ENCODE measurements at regions of chr14 and their contacts with region 1.

Region 1: GRCh38 chr14:23512156-23512555 is 39.4 kb downstream of the ZFHX2 start:
- DNase-seq: no peak
- H3K4me3 ChIP-seq: no peak overlapping the region
- H3K27ac ChIP-seq: no peak overlapping the region
- H3K4me1 ChIP-seq: peaks cover 0 to 5% (median 2%) of the 10 kb centered on the region in 4 experiments; a peak in 3 of 7 replicates
- H3K27me3 ChIP-seq: peaks cover 0 to 4% (median 0%) of the 10 kb centered on the region in 4 experiments; a peak in 1 of 7 replicates
- CTCF ChIP-seq: no peak
- EP300 ChIP-seq: no peak
- POLR2A ChIP-seq: no peak
- RAD21 ChIP-seq: no peak

Region 2: DNA sequence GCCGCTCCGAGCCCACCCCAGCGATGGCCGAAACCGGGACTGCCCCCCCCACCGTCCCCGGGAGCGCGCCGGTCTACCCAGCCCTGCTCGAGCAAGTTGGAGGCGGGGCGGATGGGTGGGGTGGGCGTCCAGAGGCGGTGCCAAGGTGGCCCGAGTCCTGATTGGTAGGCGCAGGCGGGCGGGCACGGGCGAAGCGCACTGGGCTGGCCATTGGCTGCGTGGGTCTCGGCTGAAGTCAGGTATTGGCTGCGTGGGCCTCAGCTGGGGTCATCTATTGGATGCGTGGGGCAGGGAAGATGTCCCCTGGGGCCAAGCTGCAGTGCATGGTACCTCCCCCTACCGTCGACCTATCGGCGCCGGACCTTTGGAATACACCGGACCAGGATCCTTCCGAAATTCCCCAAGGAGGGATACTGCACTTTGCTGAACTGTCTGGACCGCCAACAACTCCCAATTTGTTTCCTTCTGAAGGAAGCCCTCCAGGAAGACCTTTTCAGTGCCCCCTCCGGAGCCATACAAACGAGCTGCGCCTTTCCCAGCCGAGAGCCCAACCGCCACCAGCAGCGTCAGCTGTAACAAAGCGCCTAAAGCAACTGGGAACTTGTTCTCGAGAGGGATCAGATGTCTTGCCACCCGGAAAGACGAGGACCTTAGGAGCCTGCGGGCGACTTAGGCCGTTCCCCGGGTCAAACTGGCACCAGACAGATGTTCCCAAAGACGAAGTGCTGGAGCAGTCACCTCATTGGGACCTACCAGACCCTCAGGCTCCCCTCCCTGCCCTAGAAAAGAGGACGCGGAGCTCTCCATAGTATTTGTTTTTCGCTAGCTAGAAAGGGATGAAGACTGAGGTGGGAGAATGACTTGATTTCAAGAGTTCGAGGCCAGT is 225.9 kb before region 1 on chr14 and contains the start of gene HOMEZ:
- CTCF ChIA-PET with region 1: no interaction called
- POLR2A ChIA-PET with region 1: no interaction called
- DNase-seq: peak; percentile 89 to 96
- H3K4me3 ChIP-seq: peak within 1 kb of the TSS; percentile 69 to 98 (median 78)
- H3K27ac ChIP-seq: no peak within 1 kb of the TSS
- H3K4me1 ChIP-seq: no peaks in the 10 kb centered on the region
- H3K27me3 ChIP-seq: peaks cover 9 to 32% (median 28%) of the 10 kb centered on the region in 4 experiments
- CTCF ChIP-seq: peak in 1 of 3 experiments; percentile 17; a peak in 1 of 4 replicates
- EP300 ChIP-seq: no peak
- POLR2A ChIP-seq: peak in 1 of 2 experiments; percentile 50; a peak in 1 of 3 replicates
- RAD21 ChIP-seq: no peak
- total RNA-seq, gene HOMEZ: 9.1 and 9.7 TPM in 2 replicates

Region 3: GRCh38 chr14:23457587-23458445 is 54.3 kb before region 1 on chr14:
- CTCF ChIA-PET with region 1: no interaction called
- POLR2A ChIA-PET with region 1: no interaction called
- DNase-seq: no peak
- H3K4me3 ChIP-seq: no peak overlapping the region
- H3K27ac ChIP-seq: no peak overlapping the region
- H3K4me1 ChIP-seq: no peaks in the 10 kb centered on the region
- H3K27me3 ChIP-seq: no peaks in the 10 kb centered on the region
- CTCF ChIP-seq: no peak
- EP300 ChIP-seq: no peak
- POLR2A ChIP-seq: no peak
- RAD21 ChIP-seq: no peak

Region 4: DNA sequence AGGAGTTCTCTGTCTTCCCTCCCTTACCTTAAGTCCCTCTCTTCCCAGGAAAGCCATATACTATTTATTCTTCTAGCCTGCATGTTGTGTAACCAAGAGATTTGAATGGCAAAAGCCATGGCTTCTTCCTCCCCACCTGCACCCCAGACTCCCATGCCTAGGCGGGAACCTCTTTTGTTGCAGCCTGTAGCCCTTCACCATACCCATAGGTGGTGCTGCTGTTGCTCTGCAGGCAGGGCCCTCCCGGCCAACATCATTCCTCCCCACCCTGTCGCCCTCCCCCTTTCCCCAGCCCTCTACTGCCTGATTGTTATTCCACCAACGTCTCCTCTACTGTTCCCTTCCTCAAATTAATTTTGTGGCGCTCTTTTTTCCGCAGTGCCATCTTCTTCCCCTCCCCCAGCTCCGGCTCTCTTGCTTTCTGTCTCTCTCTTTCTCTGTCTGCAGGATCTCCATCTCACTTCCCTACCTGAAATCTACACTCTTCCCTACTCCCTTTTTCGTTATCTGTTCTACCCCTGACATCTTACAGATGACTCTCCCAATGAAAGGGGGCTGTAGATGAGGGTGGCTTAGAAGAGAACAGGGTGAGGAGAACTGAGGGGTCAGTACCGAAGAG is 28.8 kb before region 1 on chr14:
- CTCF ChIA-PET with region 1: interaction called, 2,092 read pairs
- POLR2A ChIA-PET with region 1: interaction called, 12 read pairs
- DNase-seq: peak in 1 of 2 experiments; percentile 71
- H3K4me3 ChIP-seq: peak overlapping the region in 1 of 4 experiments; percentile 35; a peak in 1 of 8 replicates
- H3K27ac ChIP-seq: peak overlapping the region; percentile 63; the same call in 1 of the 2 replicates
- H3K4me1 ChIP-seq: peaks cover 14 to 46% (median 36%) of the 10 kb centered on the region in 4 experiments
- H3K27me3 ChIP-seq: peaks cover 0 to 1% (median 0%) of the 10 kb centered on the region in 4 experiments; a peak in 1 of 7 replicates
- CTCF ChIP-seq: peak; percentile 94 to 98 (median 94)
- EP300 ChIP-seq: peak in 1 of 2 experiments; percentile 7; a peak in 1 of 3 replicates
- POLR2A ChIP-seq: 0 out of 3 replicates have a peak, but pooled peaks of 1 of the 2 experiments have one; percentile 5
- RAD21 ChIP-seq: peak; percentile 93 to 96

Region 5: DNA sequence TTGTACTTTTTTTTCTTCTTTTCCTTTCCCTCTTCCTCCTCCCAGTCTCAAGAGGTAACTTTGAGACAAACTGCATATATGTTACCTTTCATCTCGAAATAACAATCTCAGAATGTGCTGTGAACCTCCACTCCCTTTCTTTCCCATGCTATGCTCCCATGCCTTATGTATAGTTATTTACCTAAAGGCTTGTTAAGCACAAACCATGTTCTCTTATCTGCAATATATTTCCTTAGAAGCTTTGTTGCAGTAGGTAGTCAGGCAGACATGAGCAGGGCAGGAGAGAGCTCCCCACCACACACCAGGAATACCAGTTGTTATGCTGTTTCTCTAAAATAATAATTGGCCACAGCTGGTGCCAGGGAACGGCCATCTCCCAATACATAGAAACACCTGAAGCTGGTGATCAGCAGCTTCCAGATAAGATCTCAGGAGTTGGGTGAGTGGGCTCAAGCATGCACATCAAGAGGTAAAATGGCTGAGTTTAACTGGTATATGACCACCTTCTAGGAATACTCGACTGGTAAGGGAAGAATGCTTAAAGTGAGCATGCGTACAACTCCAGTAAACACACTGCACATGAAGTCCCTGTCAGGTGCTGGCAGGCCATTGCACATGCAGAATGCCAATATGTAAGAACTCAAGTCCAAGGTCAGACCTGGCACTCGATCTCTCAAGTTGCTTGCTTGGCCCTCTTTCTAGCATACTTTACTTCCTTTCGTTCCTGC is 109.2 kb after region 1 on chr14:
- CTCF ChIA-PET with region 1: no interaction called
- POLR2A ChIA-PET with region 1: no interaction called
- DNase-seq: no peak
- H3K4me3 ChIP-seq: no peak overlapping the region
- H3K27ac ChIP-seq: no peak overlapping the region
- H3K4me1 ChIP-seq: no peaks in the 10 kb centered on the region
- H3K27me3 ChIP-seq: no peaks in the 10 kb centered on the region
- CTCF ChIP-seq: no peak
- EP300 ChIP-seq: no peak
- POLR2A ChIP-seq: no peak
- RAD21 ChIP-seq: no peak

Region 6: DNA sequence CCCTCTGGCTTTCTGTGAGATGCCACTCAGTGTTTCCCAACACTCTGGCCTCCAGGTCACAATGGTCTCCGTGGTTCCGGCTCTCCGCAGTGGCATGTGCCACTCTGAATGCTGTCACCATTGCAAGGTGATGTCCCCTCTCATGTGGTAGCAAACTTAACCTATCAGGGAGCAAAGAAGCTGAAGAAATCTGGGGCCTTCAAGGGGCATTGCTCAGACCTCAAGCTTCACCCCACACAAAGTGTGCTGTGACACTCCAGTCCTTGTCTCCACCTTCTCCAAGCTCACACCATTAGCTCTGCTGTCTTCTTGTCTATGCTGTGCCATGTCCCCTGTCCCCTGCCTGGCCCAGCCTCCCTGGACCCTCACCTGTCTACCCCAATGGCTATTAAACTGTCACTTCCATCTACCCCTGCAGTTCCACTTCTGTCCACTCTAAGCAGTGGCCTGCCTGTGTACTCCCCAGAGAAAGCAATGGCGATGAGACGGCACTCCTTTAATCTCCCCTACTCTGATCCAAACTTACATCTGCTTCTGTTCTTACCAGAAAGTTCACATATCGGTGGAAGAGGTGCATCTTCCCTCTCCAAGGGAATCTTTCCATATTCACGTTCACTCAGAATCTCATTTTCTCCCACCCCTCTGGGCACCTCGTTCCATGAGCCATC is 217.7 kb after region 1 on chr14:
- CTCF ChIA-PET with region 1: no interaction called
- POLR2A ChIA-PET with region 1: no interaction called
- DNase-seq: no peak
- H3K4me3 ChIP-seq: no peak overlapping the region
- H3K27ac ChIP-seq: no peak overlapping the region
- H3K4me1 ChIP-seq: peaks cover 0 to 4% (median 0%) of the 10 kb centered on the region in 4 experiments; a peak in 1 of 7 replicates
- H3K27me3 ChIP-seq: no peaks in the 10 kb centered on the region
- CTCF ChIP-seq: peak in 2 of 3 experiments; percentile 8 to 27; a peak in 2 of 4 replicates
- EP300 ChIP-seq: no peak
- POLR2A ChIP-seq: no peak
- RAD21 ChIP-seq: no peak; a peak in 1 of 4 replicates

Measured in H1 (cell line).